ENCODE measurements at regions of chr4 and their contacts with region 1.

Region 1: DNA sequence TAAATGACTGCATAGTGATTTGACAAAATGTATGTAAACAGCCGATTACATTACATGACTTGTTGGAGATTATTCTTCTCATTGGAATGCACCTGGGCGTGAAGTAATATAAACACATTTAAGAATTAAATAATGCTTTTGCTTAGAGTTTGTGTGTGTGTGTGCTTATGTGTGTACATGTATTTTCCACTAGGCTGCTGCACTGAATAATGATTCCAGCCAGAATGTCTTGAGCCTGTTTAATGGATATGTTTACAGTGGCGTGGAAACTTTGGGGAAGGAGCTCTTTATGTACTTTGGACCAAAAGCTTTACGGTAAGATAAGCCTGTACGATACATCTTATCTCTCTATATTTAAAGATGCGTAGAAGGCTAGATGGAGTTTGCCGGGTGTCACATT is 12.6 kb downstream of the NEIL3 start:
- DNase-seq: no peak
- H3K4me3 ChIP-seq: peak overlapping the region; percentile 23; the same call in 1 of the 2 replicates
- H3K27ac ChIP-seq: no peak overlapping the region
- H3K27me3 ChIP-seq: no peaks in the 10 kb centered on the region
- CTCF ChIP-seq: no peak

Region 2: GRCh38 chr4:177281351-177281909 is 40.8 kb before region 1 on chr4:
- CTCF ChIA-PET with region 1: no interaction called
- POLR2A ChIA-PET with region 1: no interaction called
- DNase-seq: no peak
- H3K4me3 ChIP-seq: no peak overlapping the region
- H3K27ac ChIP-seq: no peak overlapping the region
- H3K27me3 ChIP-seq: no peaks in the 10 kb centered on the region
- CTCF ChIP-seq: no peak

Region 3: GRCh38 chr4:177309522-177310371 is 12.5 kb before region 1 on chr4 and contains the start of gene NEIL3:
- CTCF ChIA-PET with region 1: interaction called, 3 read pairs
- POLR2A ChIA-PET with region 1: interaction called, 13 read pairs
- DNase-seq: peak; percentile 71
- H3K4me3 ChIP-seq: peak within 1 kb of the TSS; percentile 79
- H3K27ac ChIP-seq: no peak within 1 kb of the TSS
- H3K27me3 ChIP-seq: no peaks in the 10 kb centered on the region
- CTCF ChIP-seq: no peak
- polyA plus RNA-seq, gene NEIL3: 2.1 and 3.7 TPM in 2 replicates

Measured in AG04450 (cell line).